ENCODE measurements at regions of chr14 and their contacts with region 1.

Region 1: GRCh38 chr14:39114073-39114838 is at the start of gene GEMIN2:
- DNase-seq: peak; percentile 86 to 97 (median 93)
- ATAC-seq: peak; percentile 98
- H3K4me3 ChIP-seq: peak within 1 kb of the TSS; percentile 73 to 92
- H3K4me3 Mint-ChIP-seq: peak within 1 kb of the TSS; percentile 99
- H3K27ac ChIP-seq: peak within 1 kb of the TSS; percentile 72 to 84
- H3K27ac Mint-ChIP-seq: peak within 1 kb of the TSS; percentile 98
- H3K4me1 ChIP-seq: peaks cover 8% of the 10 kb centered on the region
- H3K4me1 Mint-ChIP-seq: peaks cover 28% of the 10 kb centered on the region
- H3K27me3 ChIP-seq: no peaks in the 10 kb centered on the region
- H3K27me3 Mint-ChIP-seq: no peaks in the 10 kb centered on the region
- CTCF ChIP-seq: no peak
- total RNA-seq, gene GEMIN2: 14.0 to 14.5 TPM

Region 2: DNA sequence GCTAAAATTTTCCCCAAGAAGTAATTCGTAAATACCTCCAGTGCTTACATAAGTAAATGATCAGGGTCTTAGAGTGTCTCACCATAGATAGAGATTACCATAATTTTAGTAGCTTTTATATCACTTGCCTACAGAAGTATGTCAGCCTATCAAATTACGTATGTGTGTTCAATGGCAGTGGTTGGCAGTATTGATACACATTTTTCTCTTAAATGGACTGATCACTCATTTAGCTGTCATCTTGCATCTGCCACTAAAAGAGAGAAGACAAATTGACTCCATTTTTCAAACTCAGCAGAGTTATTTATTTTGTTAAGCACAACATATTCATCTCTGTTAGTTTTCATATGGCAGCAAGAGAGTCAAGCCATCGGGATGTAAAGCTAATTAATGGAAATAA is 445.2 kb before region 1 on chr14:
- CTCF ChIA-PET with region 1: no interaction called
- POLR2A ChIA-PET with region 1: no interaction called
- intact Hi-C with region 1: no loop called
- DNase-seq: no peak
- ATAC-seq: no peak
- H3K4me3 ChIP-seq: no peak overlapping the region
- H3K4me3 Mint-ChIP-seq: no peak overlapping the region
- H3K27ac ChIP-seq: no peak overlapping the region
- H3K27ac Mint-ChIP-seq: no peak overlapping the region
- H3K4me1 ChIP-seq: no peaks in the 10 kb centered on the region
- H3K4me1 Mint-ChIP-seq: no peaks in the 10 kb centered on the region
- H3K27me3 ChIP-seq: no peaks in the 10 kb centered on the region
- H3K27me3 Mint-ChIP-seq: no peaks in the 10 kb centered on the region
- CTCF ChIP-seq: no peak

Region 3: GRCh38 chr14:39085933-39086332 is 28.3 kb before region 1 on chr14:
- CTCF ChIA-PET with region 1: no interaction called
- POLR2A ChIA-PET with region 1: no interaction called
- intact Hi-C with region 1: no loop called
- DNase-seq: no peak
- ATAC-seq: no peak
- H3K4me3 ChIP-seq: no peak overlapping the region
- H3K4me3 Mint-ChIP-seq: no peak overlapping the region
- H3K27ac ChIP-seq: no peak overlapping the region
- H3K27ac Mint-ChIP-seq: no peak overlapping the region
- H3K4me1 ChIP-seq: no peaks in the 10 kb centered on the region
- H3K4me1 Mint-ChIP-seq: peaks cover 21% of the 10 kb centered on the region
- H3K27me3 ChIP-seq: no peaks in the 10 kb centered on the region
- H3K27me3 Mint-ChIP-seq: no peaks in the 10 kb centered on the region
- CTCF ChIP-seq: no peak

Region 4: DNA sequence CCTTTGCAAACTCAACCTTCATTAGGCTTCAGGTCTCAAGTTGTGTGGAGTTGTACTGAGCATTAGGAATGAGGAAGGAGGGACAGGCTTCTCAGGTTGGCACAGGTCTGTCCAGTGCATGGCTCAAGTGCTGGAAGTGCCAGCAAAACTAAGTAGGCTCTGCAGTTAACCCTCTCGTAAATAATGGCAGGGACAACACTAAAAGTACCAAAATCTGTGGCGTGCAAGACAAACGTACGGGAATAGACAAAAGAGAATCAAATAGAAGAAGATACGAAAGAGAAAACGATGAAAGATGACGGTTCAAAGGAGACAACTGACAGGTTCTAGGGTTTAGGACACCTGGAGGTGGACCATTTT is 55.3 kb after region 1 on chr14:
- CTCF ChIA-PET with region 1: interaction called, 3 read pairs
- POLR2A ChIA-PET with region 1: interaction called, 16 read pairs
- intact Hi-C with region 1: loop called (anchors 1 kb)
- DNase-seq: no peak
- ATAC-seq: no peak
- H3K4me3 ChIP-seq: peak overlapping the region; percentile 78 to 97
- H3K4me3 Mint-ChIP-seq: peak overlapping the region; percentile 87
- H3K27ac ChIP-seq: peak overlapping the region; percentile 84 to 94
- H3K27ac Mint-ChIP-seq: peak overlapping the region; percentile 99
- H3K4me1 ChIP-seq: peaks cover 34% of the 10 kb centered on the region
- H3K4me1 Mint-ChIP-seq: peaks cover 52% of the 10 kb centered on the region
- H3K27me3 ChIP-seq: no peaks in the 10 kb centered on the region
- H3K27me3 Mint-ChIP-seq: no peaks in the 10 kb centered on the region
- CTCF ChIP-seq: no peak